OCI-LY7 (cell line): ENCODE measurements at regions of chr2 and their contacts with region 1.

Region 1: GRCh38 chr2:199704358-199705238 is 146.4 kb downstream of the FTCDNL1 start:
- DNase-seq: peak; percentile 49
- H3K4me3 ChIP-seq: no peak overlapping the region
- H3K27ac ChIP-seq: no peak overlapping the region
- H3K4me1 ChIP-seq: no peaks in the 10 kb centered on the region
- CTCF ChIP-seq: peak; percentile 80

Region 2: DNA sequence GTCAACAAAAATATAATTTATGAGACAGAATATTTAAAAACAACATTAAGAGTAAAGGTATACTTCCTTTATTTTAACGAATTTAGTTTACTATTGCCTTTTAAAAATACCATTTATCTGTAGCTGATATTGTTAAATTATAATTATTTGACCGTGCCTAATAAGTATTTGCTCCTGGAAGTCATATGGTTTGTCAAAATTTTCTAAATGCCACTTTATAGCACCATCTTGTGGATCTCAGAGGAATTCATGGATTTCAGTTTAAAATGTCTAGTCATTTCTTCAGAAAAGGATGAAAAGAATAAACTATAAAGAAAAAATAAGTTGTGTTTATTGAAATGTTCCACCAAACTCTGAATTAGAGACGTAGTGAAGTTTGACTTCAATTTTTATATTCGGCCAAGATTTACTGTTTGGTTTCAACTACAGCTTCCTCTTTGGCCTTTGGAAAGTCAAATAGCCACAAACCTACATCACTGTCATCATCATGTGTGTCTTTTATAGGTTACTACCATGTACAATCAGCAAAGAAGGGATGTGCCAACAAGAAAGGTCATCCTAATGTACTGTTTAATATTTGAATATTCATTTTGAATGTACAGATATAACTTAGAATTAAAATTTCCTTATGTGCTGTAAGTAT is 156.7 kb after region 1 on chr2:
- CTCF ChIA-PET with region 1: no interaction called
- POLR2A ChIA-PET with region 1: no interaction called
- intact Hi-C with region 1: loop called (anchors 5 kb)
- DNase-seq: peak; percentile 38
- H3K4me3 ChIP-seq: no peak overlapping the region
- H3K27ac ChIP-seq: no peak overlapping the region
- H3K4me1 ChIP-seq: no peaks in the 10 kb centered on the region
- CTCF ChIP-seq: peak; percentile 90

Region 3: GRCh38 chr2:199922856-199923255 is 218.3 kb after region 1 on chr2:
- CTCF ChIA-PET with region 1: no interaction called
- POLR2A ChIA-PET with region 1: no interaction called
- intact Hi-C with region 1: no loop called
- DNase-seq: peak; percentile 11
- H3K4me3 ChIP-seq: no peak overlapping the region
- H3K27ac ChIP-seq: no peak overlapping the region
- H3K4me1 ChIP-seq: peaks cover 11% of the 10 kb centered on the region
- CTCF ChIP-seq: no peak